ENCODE measurements at regions of chr11 and their contacts with region 1.

Region 1: GRCh38 chr11:124673333-124674167 is at the starts of genes SIAE and SPA17:
- DNase-seq: peak; percentile 75 to 93 (median 88)
- ATAC-seq: peak; percentile 75
- H3K4me3 Mint-ChIP-seq: peak within 1 kb of the TSS; percentile 78 to 98 (median 91)
- H3K27ac Mint-ChIP-seq: peak within 1 kb of the TSS in 9 of 10 donors; percentile 95 to 100 (median 98)
- H3K4me1 Mint-ChIP-seq: peaks cover 18 to 39% (median 26%) of the 10 kb centered on the region in 4 donors
- H3K27me3 Mint-ChIP-seq: peaks cover 0 to 2% (median 0%) of the 10 kb centered on the region in 5 donors
- polyA plus RNA-seq, gene SIAE: 3.2 to 5.8 (median 4.2) TPM
- polyA plus RNA-seq, gene SPA17: 1.2 to 2.5 (median 1.7) TPM

Region 2: DNA sequence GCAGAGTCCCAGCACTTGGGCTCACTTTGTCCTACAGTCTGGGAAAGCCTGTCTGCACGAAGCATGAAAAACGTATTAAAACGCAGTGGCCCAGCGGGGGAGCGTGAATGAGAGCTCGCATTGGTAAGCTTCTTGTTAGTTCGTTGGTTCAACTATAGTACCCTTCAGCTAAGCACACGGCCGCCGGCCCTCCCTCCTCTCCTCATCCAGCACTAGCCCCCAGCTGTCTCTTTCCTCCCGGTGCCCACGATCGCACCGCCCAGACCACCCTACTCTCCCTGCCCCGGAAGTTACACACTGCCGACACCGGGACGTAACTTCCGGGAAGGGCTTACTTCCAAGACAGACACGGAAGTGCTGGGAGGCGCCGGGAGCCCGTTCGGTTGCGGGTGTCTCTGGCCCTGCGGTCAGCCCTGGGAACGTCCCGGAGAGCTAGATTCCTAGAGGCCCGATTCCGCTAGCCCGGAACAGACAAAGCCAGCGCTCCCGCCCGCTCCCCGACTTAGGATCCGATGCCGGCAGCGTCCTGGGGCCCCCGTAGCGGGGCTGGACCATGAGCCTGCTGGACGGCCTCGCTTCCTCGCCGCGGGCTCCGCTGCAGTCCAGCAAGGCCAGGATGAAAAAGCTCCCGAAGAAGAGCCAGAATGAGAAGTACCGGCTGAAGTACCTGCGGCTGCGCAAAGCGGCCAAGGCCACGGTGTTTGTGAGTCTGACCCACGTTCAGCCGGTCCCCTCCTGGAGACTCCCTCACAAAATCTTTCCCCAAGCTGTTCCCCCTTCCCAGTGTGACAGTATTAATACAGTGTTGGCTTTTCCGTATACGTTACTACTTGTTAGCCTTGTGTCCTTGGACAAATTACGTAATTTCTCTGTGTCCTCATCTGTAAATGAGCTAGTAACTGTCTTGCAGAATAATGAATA is 50.8 kb before region 1 on chr11 and contains the start of gene TBRG1:
- POLR2A ChIA-PET with region 1: interaction called, 12 read pairs
- DNase-seq: peak; percentile 68 to 93 (median 81)
- ATAC-seq: peak; percentile 97
- H3K4me3 Mint-ChIP-seq: peak within 1 kb of the TSS; percentile 87 to 99 (median 96)
- H3K27ac Mint-ChIP-seq: peak within 1 kb of the TSS; percentile 95 to 99 (median 98)
- H3K4me1 Mint-ChIP-seq: peaks cover 18 to 45% (median 37%) of the 10 kb centered on the region in 4 donors
- H3K27me3 Mint-ChIP-seq: peaks cover 0 to 12% (median 8%) of the 10 kb centered on the region in 5 donors
- polyA plus RNA-seq, gene TBRG1: 34.9 to 37.7 (median 35.8) TPM

Region 3: DNA sequence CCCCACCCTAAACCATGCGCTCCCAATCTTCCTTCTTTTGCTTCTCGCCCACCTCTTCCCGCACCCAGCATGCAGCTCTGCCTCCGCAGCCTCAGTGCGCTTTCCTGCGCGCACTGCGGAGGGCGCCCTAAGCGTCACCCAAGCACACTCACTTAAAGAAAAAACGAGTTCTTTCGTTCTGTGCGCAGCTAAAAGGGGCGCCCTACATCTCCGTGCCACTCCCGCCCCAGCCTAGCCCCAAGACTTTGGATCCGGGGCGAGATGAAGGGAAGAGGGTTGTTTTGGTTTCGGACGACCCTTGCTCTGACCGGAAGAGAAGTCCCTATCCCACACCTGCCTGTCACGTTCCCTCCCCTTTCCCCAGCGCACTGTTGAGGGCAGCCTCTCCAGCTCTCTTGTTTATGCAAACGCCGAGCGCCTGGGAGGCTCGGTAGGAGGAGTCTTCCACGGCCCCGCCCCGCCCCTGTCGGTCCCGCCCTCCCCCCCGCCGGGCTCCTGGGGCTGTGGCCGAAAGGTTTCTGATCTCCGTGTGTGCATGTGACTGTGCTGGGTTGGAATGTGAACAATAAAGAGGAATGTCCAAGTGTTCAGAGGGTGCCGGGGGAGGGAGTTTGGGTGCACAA is 73.2 kb after region 1 on chr11:
- POLR2A ChIA-PET with region 1: interaction called, 63 read pairs
- DNase-seq: peak; percentile 67 to 89 (median 78)
- ATAC-seq: peak; percentile 91 to 93
- H3K4me3 Mint-ChIP-seq: peak overlapping the region; percentile 86 to 99 (median 97)
- H3K27ac Mint-ChIP-seq: peak overlapping the region; percentile 77 to 99 (median 96)
- H3K4me1 Mint-ChIP-seq: peaks cover 5 to 36% (median 20%) of the 10 kb centered on the region in 4 donors
- H3K27me3 Mint-ChIP-seq: peaks cover 0 to 2% (median 2%) of the 10 kb centered on the region in 5 donors

Region 4: DNA sequence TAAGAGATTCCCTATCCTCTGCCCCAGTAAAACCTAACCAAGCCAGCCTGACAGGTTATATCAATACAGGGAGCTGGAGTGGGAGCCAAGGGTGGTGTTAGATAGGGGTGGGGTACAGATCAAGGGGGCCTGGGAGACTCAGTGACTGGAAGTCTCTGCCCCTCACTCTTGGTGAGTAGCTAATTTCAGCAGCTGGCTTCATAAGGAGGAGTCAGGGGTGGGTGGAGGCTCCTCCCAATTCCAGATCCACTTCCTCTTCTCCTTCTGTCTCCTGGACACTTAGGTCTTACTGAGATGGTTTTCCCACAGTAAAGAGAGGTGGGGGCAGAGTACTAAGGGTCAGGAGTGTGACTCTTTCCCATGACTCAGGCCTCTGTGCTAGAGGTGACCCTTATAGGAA is 79.7 kb after region 1 on chr11:
- POLR2A ChIA-PET with region 1: interaction called, 24 read pairs
- DNase-seq: no peak
- ATAC-seq: no peak
- H3K4me3 Mint-ChIP-seq: no peak overlapping the region
- H3K27ac Mint-ChIP-seq: peak overlapping the region in 3 of 10 donors; percentile 22 to 88 (median 35)
- H3K4me1 Mint-ChIP-seq: peaks cover 2 to 33% (median 13%) of the 10 kb centered on the region in 4 donors
- H3K27me3 Mint-ChIP-seq: peaks cover 14 to 30% (median 19%) of the 10 kb centered on the region in 5 donors

Region 5: GRCh38 chr11:124758317-124759203 is 85.0 kb after region 1 on chr11:
- POLR2A ChIA-PET with region 1: interaction called, 41 read pairs
- DNase-seq: peak; percentile 39 to 79 (median 65)
- ATAC-seq: peak; percentile 64 to 75
- H3K4me3 Mint-ChIP-seq: peak overlapping the region; percentile 63 to 88 (median 76)
- H3K27ac Mint-ChIP-seq: peak overlapping the region in 3 of 10 donors; percentile 53 to 78 (median 73)
- H3K4me1 Mint-ChIP-seq: peaks cover 13 to 42% (median 39%) of the 10 kb centered on the region in 4 donors
- H3K27me3 Mint-ChIP-seq: peaks cover 24 to 59% (median 31%) of the 10 kb centered on the region in 5 donors